Naive thymus-derived CD8-positive, alpha-beta T cell (primary cell): ENCODE measurements at regions of chr4 and their contacts with region 1.

Region 1: DNA sequence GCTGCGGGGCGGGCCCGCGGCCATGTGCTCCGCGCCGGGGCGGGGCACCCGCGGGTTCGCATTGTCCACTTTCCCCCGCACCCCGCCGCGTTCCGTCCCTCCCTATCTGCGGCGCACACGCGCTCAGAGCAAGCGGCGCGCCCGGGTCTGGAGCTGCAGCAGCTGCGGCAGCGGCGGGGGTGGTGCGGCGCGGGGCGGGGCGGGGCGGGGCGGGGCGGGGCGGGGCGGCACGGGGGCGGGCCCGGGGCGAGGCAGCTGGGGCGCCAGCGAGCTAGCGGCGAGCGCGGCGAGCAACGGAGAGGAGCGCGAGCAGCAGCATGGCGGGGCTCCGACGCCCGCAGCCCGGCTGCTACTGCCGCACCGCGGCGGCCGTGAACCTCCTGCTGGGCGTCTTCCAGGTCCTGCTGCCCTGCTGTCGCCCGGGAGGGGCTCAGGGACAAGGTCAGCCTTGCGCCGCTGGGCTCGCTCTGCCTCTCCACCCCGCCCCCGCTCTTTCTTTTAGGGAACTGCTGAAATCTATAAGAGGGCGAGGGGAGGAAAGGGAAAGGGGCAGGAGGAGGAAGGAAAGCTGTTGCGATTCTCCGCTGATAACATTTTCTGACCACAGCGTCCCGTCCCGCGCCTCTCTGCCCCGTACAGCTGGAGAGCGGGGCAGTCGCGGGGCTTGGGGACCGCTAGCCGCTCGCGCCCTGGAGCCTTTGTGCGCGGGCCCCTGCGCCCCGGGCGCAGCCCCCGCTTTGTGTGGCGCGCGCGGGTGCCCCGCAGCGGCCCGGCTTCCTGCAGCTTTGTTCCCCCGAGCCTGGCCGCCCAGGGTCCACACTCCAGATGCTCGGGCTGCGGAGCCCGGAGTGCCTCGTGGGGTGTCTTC is at the start of gene TMEM131L:
- DNase-seq: peak; percentile 59 to 77 (median 71)
- ATAC-seq: peak; percentile 76 to 78
- H3K4me3 Mint-ChIP-seq: peak within 1 kb of the TSS; percentile 93 to 98 (median 97)
- H3K27ac Mint-ChIP-seq: peak within 1 kb of the TSS; percentile 92 to 99 (median 97)
- H3K4me1 Mint-ChIP-seq: peaks cover 22 to 53% (median 43%) of the 10 kb centered on the region in 4 donors
- H3K27me3 Mint-ChIP-seq: no peaks in the 10 kb centered on the region
- polyA plus RNA-seq, gene TMEM131L: 13.8 to 32.9 (median 26.7) TPM

Region 2: DNA sequence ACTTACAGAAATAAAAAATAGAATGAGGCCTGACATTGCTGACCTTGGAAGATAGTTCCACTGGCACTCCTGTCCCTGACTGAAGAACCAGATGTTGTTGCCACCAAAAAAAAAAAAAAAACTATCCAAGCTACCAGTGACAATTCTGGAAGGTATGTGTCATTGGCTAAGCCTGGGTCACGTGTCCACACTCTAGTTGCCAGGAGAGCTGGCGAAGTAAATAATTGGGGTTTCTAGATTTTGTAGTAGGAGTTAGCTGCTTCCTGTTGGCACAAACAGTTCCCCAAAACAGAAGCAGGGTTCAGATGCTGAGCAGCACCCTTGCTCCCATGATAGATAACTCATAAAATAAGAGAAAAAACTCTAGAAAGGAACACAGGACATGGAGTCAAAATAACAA is 101.3 kb before region 1 on chr4:
- POLR2A ChIA-PET with region 1: no interaction called
- DNase-seq: no peak
- ATAC-seq: no peak
- H3K4me3 Mint-ChIP-seq: no peak overlapping the region
- H3K27ac Mint-ChIP-seq: peak overlapping the region in 1 of 10 donors; percentile 22
- H3K4me1 Mint-ChIP-seq: peaks cover 0 to 7% (median 1%) of the 10 kb centered on the region in 4 donors
- H3K27me3 Mint-ChIP-seq: no peaks in the 10 kb centered on the region

Region 3: DNA sequence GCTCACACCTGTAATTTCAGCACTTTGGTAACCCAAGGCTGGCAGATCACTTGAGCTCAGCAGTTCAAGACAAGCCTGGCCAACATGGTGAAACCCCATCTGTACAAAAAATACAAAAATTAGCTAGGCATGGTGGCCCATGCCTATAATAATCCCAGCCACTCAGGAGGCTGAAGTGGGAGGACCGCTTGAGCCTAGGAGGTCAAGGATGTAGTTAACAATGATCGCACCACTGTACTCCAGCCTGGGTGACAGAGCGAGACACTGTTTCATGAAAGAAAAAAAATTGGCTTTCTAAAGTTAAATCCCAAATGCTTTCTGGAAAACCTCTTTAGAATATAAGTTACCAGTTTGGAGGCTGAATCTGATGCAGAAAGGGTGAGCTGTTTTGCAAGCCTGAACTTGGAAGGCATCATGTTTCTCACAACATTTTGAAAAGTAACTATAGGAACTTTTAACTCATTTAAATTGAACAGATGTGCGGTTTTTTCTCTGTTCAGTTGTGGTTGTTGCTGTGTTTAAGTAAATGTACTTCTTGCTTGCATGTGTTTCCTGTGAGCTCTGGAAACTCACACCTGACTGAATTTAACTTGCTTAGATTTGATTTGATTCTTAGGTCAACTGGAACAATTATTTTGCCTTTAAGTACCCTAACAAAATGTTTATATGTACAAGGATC is 40.0 kb before region 1 on chr4:
- POLR2A ChIA-PET with region 1: interaction called, 31 read pairs
- DNase-seq: peak in 6 of 10 donors; percentile 24 to 86 (median 66)
- ATAC-seq: peak; percentile 87 to 92
- H3K4me3 Mint-ChIP-seq: peak overlapping the region; percentile 52 to 85 (median 68)
- H3K27ac Mint-ChIP-seq: peak overlapping the region; percentile 89 to 98 (median 95)
- H3K4me1 Mint-ChIP-seq: peaks cover 20 to 62% (median 56%) of the 10 kb centered on the region in 4 donors
- H3K27me3 Mint-ChIP-seq: no peaks in the 10 kb centered on the region

Region 4: DNA sequence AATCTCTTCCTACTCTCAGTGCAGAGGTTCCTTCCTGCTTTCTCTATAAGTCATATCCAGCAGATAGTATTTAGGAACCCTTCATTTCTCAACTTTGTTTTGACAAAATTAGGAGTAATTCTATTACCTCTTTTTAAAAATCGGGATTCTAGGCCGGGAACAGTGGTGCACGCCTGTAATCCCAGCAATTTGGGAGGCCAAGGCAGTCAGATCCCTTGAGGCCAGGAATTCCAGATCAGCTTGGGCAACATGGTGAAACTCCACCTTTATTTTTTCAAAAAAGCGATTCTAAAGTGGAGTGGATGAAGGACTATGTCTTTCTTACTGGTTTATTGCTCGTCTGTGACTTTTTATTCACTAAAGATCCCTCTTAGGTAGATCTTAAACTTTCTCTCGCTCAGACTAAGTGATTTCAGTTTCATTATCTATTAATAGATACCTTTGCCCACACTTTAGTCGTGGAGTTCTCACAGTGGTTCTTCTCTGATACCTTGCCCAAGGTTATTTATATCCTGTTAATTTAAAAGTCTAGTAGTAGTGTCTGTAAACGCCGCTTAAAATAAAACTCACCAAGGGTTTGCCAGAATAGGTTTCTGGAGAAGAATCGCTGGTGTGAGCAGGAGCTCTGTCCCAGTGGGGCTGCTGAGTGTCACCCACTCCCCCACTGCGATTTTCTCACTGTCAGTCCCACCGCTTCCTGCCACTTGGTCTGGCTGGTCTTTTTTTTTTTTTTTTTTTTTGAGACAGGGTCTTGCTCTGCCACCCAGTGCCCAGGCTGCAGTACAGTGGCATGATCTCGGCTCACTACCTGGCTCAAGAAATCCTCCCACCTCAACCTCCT is 27.2 kb before region 1 on chr4:
- POLR2A ChIA-PET with region 1: interaction called, 25 read pairs
- DNase-seq: peak; percentile 3 to 71 (median 48)
- ATAC-seq: peak; percentile 73 to 88
- H3K4me3 Mint-ChIP-seq: peak overlapping the region; percentile 83 to 92 (median 86)
- H3K27ac Mint-ChIP-seq: peak overlapping the region; percentile 84 to 97 (median 94)
- H3K4me1 Mint-ChIP-seq: peaks cover 26 to 62% (median 47%) of the 10 kb centered on the region in 4 donors
- H3K27me3 Mint-ChIP-seq: no peaks in the 10 kb centered on the region

Region 5: DNA sequence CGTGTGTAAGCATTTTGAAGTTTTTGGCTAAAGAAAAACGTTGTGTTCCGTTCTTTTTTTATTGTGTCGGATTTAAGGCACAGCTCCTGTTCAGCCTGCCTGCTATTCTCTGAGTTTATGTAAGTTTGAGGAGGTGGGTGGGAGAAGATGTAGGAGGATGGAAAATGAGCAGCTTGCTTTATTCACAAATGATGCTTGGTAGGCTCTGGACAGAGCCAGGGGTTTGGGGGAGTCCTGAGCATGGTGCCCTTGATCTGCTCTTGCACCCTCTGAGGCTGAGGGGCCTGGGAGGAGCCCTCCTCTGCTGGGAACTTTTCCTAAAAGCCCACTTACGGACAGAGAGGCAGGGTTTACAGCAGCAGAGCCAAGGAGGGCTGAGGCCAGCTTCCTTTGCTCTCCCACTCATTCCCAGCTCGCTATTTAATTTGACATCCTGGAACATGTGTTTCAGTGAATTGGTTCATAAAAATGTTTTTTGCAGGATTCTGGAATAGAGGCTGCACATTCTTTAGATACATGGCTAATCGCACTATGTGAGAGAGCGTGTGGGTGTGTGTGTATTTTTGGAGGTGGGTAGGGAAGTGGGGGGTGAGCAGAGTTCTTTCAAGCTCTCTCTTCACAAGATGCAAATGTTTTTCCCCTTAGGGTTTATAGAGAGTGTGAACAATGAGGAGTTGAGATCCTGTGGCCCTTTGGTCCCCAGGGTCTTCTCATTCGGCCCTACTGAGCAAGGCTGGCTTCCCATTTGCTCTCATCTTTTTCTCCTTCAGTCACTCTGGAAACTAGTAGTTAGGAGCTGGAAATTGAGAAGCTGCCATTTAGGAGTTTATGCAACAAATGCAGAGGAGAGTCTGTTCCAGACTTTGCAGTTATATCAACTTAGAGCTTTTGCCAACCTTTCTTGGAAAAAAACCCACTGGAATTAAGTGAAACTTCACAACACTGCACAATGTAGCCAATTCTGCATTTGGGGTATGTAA is 32.0 kb after region 1 on chr4:
- POLR2A ChIA-PET with region 1: interaction called, 74 read pairs
- DNase-seq: peak in 1 of 10 donors; percentile 34
- ATAC-seq: peak; percentile 41 to 64
- H3K4me3 Mint-ChIP-seq: peak overlapping the region; percentile 59 to 83 (median 76)
- H3K27ac Mint-ChIP-seq: peak overlapping the region; percentile 92 to 100 (median 96)
- H3K4me1 Mint-ChIP-seq: peaks cover 61 to 97% (median 95%) of the 10 kb centered on the region in 4 donors
- H3K27me3 Mint-ChIP-seq: no peaks in the 10 kb centered on the region

Region 6: GRCh38 chr4:153528705-153529485 is 62.6 kb after region 1 on chr4:
- POLR2A ChIA-PET with region 1: interaction called, 65 read pairs
- DNase-seq: peak in 1 of 10 donors; percentile 16
- ATAC-seq: peak; percentile 28 to 49
- H3K4me3 Mint-ChIP-seq: peak overlapping the region; percentile 48 to 86 (median 78)
- H3K27ac Mint-ChIP-seq: peak overlapping the region; percentile 66 to 97 (median 94)
- H3K4me1 Mint-ChIP-seq: peaks cover 37 to 97% (median 96%) of the 10 kb centered on the region in 4 donors
- H3K27me3 Mint-ChIP-seq: no peaks in the 10 kb centered on the region